ENCODE measurements at regions of chr1 and their contacts with region 1.

Region 1: GRCh38 chr1:246931549-246932365 is at the start of gene AHCTF1:
- DNase-seq: peak; percentile 99
- H3K4me3 ChIP-seq: peak within 1 kb of the TSS; percentile 96 to 99 (median 97)
- H3K27ac ChIP-seq: peak within 1 kb of the TSS; percentile 99 to 100 (median 99)
- H3K4me1 ChIP-seq: peaks cover 4 to 32% (median 28%) of the 10 kb centered on the region in 4 donors
- H3K27me3 ChIP-seq: no peaks in the 10 kb centered on the region
- CTCF ChIP-seq: no peak
- EP300 ChIP-seq: no peak
- POLR2A ChIP-seq: peak; percentile 93 to 97
- total RNA-seq, gene AHCTF1: 35.7 to 61.8 (median 42.5) TPM

Region 2: GRCh38 chr1:247078261-247079140 is 146.7 kb after region 1 on chr1 and contains the start of gene ZNF670:
- intact Hi-C with region 1: loop called (anchors 10 kb)
- DNase-seq: peak; percentile 98
- H3K4me3 ChIP-seq: peak within 1 kb of the TSS; percentile 54 to 90 (median 84)
- H3K27ac ChIP-seq: peak within 1 kb of the TSS; percentile 78 to 85 (median 82)
- H3K4me1 ChIP-seq: peaks cover 0 to 15% (median 10%) of the 10 kb centered on the region in 4 donors
- H3K27me3 ChIP-seq: no peaks in the 10 kb centered on the region
- CTCF ChIP-seq: no peak
- EP300 ChIP-seq: no peak
- POLR2A ChIP-seq: peak; percentile 16 to 34
- total RNA-seq, gene ZNF670: 3.0 to 6.7 (median 3.9) TPM

Region 3: DNA sequence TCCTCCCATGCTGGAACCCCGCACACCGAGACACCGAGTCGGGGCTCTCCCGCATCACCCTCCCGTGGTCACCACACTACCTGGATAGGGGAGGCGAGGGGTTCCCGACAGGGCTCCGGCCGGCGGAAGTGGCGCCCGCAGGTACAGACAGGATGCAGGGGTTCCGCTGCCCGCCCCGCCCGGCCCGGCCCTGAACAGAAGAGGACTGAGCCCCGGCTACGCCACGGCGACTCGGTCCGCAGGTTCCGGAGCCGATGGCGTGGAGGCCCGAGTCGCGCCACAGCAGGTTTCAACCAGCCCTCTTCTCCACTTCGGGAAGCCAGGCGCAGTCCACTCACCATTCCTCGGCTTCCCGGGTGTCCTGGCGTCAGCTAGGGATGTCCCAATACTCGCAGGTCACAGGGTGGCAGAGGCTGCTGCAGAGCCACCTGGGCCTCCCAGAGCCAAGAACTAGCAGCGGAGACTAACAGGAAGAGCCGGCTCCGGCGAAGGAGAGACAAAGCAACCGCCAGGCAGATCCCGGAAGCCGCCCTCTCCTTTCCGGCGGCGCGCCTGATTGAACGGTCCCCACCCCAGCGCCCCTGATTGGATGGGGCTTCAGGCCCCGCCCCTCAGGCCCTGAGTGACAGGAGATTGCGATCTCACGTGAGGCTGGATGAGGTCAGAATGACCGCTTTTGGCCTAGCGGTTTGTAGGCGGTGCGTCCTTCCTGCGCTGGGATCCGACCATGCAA is 172.3 kb after region 1 on chr1 and contains the start of gene ZNF669:
- intact Hi-C with region 1: loop called (anchors 2 kb)
- DNase-seq: peak; percentile 99
- H3K4me3 ChIP-seq: peak within 1 kb of the TSS; percentile 76 to 91 (median 84)
- H3K27ac ChIP-seq: peak within 1 kb of the TSS; percentile 87 to 93 (median 88)
- H3K4me1 ChIP-seq: peaks cover 0 to 22% (median 18%) of the 10 kb centered on the region in 4 donors
- H3K27me3 ChIP-seq: no peaks in the 10 kb centered on the region
- CTCF ChIP-seq: no peak
- EP300 ChIP-seq: no peak
- POLR2A ChIP-seq: peak; percentile 75 to 78
- total RNA-seq, gene ZNF669: 4.2 to 5.8 (median 5.2) TPM